AG04450 (cell line): ENCODE measurements at regions of chr3 and their contacts with region 1.

Region 1: GRCh38 chr3:169966428-169966950 is at the start of gene SEC62:
- DNase-seq: peak; percentile 79
- H3K4me3 ChIP-seq: peak within 1 kb of the TSS; percentile 92
- H3K27ac ChIP-seq: peak within 1 kb of the TSS; percentile 88
- H3K27me3 ChIP-seq: peaks cover 2% of the 10 kb centered on the region
- CTCF ChIP-seq: peak; percentile 59
- polyA plus RNA-seq, gene SEC62: 78.8 and 109 TPM in 2 replicates

Region 2: GRCh38 chr3:170171563-170171962 is 205.1 kb after region 1 on chr3:
- CTCF ChIA-PET with region 1: interaction called, 12 read pairs
- POLR2A ChIA-PET with region 1: no interaction called
- DNase-seq: no peak
- H3K4me3 ChIP-seq: no peak overlapping the region
- H3K27ac ChIP-seq: no peak overlapping the region
- H3K27me3 ChIP-seq: no peaks in the 10 kb centered on the region
- CTCF ChIP-seq: no peak